Heart left ventricle (tissue), 16 donors: ENCODE measurements at regions of chr17 and their contacts with region 1.

Region 1: DNA sequence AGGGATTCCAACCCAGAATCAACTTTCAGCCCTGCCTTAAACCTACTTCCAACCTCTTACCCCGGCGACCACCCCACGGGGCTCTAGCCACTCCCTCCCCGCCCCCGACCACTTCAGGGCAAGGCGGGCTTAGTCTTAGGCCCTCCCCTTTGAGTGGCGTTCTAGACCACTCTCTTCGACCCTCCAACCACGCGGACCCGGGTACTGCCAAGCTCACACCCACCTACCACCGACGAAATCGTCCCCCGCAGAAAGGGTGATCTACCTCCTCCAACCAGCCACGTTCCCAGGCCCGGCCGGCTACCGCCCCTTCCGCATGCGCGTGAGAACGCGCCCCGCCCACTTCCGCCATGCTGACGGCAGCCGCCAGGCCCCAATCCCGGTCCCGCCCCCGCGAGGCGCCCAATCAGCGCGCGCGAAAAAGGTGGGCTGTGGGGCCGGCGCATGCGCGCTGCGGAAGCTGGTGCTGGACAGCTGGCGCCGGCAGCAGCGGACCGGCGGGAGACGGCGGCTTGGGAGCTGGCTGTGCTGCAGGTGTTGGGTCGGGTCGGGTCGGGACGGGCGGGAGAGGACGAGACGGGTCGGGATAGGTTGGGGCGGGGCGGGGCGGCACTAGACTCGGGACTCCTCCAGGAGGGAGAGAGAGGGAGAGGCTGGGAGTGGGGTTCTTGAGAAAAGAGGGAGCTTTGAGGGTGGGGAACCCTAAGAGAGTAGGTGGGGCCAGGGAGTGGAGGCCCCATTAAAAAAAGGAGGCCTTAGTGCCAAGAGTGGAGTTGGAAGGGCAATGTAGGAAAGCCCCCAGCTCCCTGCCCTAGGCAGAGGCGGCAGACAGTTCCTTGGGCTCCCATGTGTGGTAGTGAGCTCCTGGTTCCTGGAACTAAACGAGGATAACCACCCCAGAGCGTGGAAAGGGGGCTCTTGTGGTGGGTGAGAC is at the start of gene NAT9:
- DNase-seq: peak; percentile 98 to 100 (median 99)
- ATAC-seq: peak; percentile 95 to 98 (median 96)
- H3K4me3 ChIP-seq: peak within 1 kb of the TSS; percentile 53 to 99 (median 84)
- H3K27ac ChIP-seq: peak within 1 kb of the TSS in 11 of 12 donors; percentile 67 to 85 (median 75)
- H3K4me1 ChIP-seq: peaks cover 0 to 73% (median 19%) of the 10 kb centered on the region in 12 donors
- H3K27me3 ChIP-seq: no peaks in the 10 kb centered on the region
- CTCF ChIP-seq: no peak
- POLR2A ChIP-seq: peak in 1 of 2 donors; percentile 87
- total RNA-seq, gene NAT9: 7.9 to 22.9 (median 17.1) TPM

Region 2: DNA sequence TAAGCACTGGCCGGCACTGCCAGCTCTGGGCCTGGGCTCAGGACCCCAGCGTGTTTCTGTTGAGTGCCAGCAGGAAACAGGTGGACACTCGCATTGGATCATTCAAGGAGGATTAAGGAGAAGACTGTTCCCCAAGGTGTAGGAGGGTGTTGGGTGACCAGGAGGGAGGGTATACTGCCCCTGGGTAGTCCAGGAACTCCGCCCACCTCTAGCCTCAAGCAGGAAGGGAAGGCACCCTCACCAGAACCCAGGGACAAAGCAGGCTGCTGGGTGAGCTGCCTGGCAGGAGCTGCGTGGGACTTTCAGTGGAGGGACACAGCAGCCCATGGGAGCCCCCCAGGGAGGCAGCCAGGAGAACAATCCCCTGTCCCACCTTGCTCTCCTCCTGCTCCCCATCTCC is 46.9 kb before region 1 on chr17:
- intact Hi-C with region 1: loop called in 1 of 10 experiments (anchors 10 kb)
- DNase-seq: no peak
- ATAC-seq: no peak
- H3K4me3 ChIP-seq: no peak overlapping the region
- H3K27ac ChIP-seq: no peak overlapping the region
- H3K4me1 ChIP-seq: peaks cover 0 to 17% (median 0%) of the 10 kb centered on the region in 12 donors
- H3K27me3 ChIP-seq: peaks cover 0 to 15% (median 4%) of the 10 kb centered on the region in 9 donors
- CTCF ChIP-seq: no peak
- POLR2A ChIP-seq: no peak

Region 3: GRCh38 chr17:74748529-74749365 is 27.6 kb before region 1 on chr17 and contains the start of gene NHERF1:
- intact Hi-C with region 1: loop called in 4 of 10 experiments (anchors 1 to 5 kb)
- DNase-seq: peak in 4 of 5 donors; percentile 95 to 97 (median 96)
- ATAC-seq: peak; percentile 91 to 97 (median 96)
- H3K4me3 ChIP-seq: peak within 1 kb of the TSS; percentile 69 to 100 (median 95)
- H3K27ac ChIP-seq: peak within 1 kb of the TSS in 11 of 12 donors; percentile 69 to 92 (median 85)
- H3K4me1 ChIP-seq: peaks cover 2 to 85% (median 40%) of the 10 kb centered on the region in 12 donors
- H3K27me3 ChIP-seq: no peaks in the 10 kb centered on the region
- CTCF ChIP-seq: peak in 6 of 12 donors; percentile 1 to 21 (median 10)
- POLR2A ChIP-seq: peak; percentile 83 to 100
- total RNA-seq, gene NHERF1: 11.6 to 42.2 (median 19.2) TPM